Activated CD4-positive, alpha-beta memory T cell treated with anti-CD3 and anti-CD28 coated beads for 36 hours (primary cell): ENCODE measurements at regions of chr1 and their contacts with region 1.

Region 1: DNA sequence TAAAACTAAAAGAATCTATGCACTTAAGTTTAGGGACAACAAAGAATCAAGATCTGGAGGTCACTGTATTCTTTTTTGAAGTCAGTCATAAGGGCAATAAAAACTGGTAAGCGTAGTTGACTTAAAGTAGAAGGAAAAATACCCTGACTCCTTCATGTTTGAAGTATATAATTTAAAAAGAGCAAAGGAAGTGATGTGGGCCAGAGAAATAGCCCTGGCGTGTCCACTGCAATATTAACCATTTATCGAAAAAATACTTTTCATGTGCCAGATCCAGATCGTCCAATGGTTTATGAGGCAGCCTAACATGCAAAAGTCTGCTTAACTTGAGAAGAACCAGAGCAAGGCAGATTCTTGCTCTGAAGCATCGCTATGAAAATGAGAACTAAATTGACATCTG is 162.0 kb downstream of the COQ8A start:
- DNase-seq: no peak
- H3K4me3 Mint-ChIP-seq: no peak overlapping the region
- H3K27ac Mint-ChIP-seq: no peak overlapping the region
- H3K4me1 Mint-ChIP-seq: no peaks in the 10 kb centered on the region
- H3K27me3 Mint-ChIP-seq: peaks cover 8% of the 10 kb centered on the region

Region 2: GRCh38 chr1:227043755-227044154 is 58.3 kb before region 1 on chr1:
- CTCF ChIA-PET with region 1: no interaction called
- POLR2A ChIA-PET with region 1: no interaction called
- intact Hi-C with region 1: loop called (anchors 10 kb)
- DNase-seq: no peak
- H3K4me3 Mint-ChIP-seq: no peak overlapping the region
- H3K27ac Mint-ChIP-seq: no peak overlapping the region
- H3K4me1 Mint-ChIP-seq: no peaks in the 10 kb centered on the region
- H3K27me3 Mint-ChIP-seq: peaks cover 22% of the 10 kb centered on the region

Region 3: DNA sequence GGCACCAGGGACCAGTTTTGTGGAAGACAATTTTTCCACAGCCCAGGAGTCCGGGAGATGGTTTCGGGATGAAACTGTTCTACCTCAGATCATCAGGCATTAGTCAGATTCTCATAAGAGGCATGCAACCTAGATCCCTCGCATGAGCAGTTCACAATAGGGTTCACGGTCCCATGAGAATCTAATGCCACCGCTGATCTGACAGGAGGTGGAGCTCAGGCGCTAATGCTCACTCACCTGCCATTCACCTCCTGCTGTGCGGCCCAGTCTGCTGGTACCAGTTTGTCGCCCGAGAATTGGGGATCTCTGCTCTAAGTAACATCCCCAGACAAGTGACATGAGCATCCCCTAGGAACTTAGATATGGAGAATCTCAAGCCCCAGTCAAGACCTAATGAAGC is 18.8 kb after region 1 on chr1:
- CTCF ChIA-PET with region 1: no interaction called
- POLR2A ChIA-PET with region 1: no interaction called
- intact Hi-C with region 1: no loop called
- DNase-seq: no peak
- H3K4me3 Mint-ChIP-seq: no peak overlapping the region
- H3K27ac Mint-ChIP-seq: no peak overlapping the region
- H3K4me1 Mint-ChIP-seq: no peaks in the 10 kb centered on the region
- H3K27me3 Mint-ChIP-seq: peaks cover 3% of the 10 kb centered on the region